ENCODE measurements at regions of chr2 and their contacts with region 1.

Region 1: DNA sequence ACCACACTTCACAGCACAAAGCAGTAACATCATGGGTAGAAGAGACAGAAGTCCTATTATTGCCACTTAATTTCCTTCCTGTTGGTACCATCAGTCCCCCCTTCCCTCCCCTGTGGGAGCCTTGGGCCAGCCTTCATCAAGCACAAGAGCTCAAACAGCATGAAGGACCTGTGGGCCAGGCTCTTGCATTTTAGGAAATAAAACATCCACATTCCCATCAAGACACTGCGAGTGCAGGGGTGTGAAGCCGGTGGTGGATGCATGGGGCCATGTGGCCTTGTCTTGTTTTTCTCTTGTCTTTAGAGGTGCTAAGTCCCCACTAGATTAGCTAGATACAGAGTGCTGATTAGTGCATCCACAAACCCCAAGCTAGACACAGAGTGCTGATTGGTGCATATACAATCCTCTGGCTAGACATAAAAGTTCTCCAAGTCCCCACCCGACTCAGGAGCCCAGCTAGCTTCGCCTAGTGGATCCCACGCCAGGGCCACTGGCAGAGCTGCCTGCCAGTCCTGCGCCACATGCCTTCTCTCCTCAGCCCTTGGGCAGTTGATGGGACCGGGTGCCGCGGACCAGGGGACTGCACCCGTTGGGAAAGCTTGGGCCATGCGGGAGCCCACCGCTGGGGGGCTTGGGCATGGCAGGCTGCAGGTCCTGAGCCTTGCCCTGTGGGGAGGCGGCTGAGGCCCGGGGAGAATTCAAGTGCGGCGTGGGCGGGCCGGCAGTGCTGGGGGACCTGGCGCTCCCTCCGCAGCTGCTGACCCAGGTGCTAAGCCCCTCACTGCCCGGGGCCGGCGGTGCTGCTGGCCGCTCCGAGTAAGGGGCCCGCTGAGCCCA is 14.7 kb upstream of the PXDN start:
- DNase-seq: no peak
- H3K4me3 ChIP-seq: no peak overlapping the region
- H3K27ac ChIP-seq: no peak overlapping the region
- H3K4me1 ChIP-seq: peaks cover 3% of the 10 kb centered on the region
- H3K27me3 ChIP-seq: no peaks in the 10 kb centered on the region
- CTCF ChIP-seq: no peak
- POLR2A ChIP-seq: no peak

Region 2: DNA sequence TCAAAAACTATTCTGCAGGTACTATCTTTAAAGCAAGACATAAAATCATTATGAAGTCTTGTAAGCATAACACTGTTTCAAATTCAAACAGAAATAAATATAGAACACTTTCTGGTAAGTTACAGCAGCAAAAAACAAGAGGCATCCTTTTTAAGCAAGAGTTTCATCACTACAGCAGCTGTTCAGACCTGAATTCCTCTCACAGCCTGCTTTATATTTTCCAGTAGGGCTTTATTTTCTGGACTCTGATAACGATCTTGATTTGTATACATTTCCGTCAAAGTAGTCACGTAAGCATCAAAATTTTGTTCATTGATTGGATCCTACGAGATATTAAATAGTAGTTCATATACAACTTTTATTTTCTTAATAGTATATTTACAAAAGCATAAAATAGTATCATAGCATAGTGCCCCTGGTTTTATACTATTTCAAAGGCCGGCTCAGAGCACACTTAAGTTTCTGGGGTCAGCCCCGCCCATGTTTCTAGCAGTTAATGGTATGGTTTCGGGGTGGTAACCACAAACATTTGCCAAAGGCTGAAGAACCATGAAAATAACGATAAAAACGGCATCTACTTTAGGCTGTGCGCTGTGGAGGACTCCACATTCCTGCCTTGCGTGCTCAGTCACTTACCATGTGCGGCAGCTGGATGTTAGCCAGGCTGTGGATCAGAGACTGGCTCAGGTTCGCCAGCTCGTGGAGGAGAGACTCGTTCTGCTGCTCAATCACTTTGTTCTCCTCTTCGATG is 32.9 kb after region 1 on chr2:
- CTCF ChIA-PET with region 1: no interaction called
- POLR2A ChIA-PET with region 1: no interaction called
- dilution Hi-C with region 1: no loop called
- intact Hi-C with region 1: loop called (anchors 2 kb)
- DNase-seq: no peak
- H3K4me3 ChIP-seq: no peak overlapping the region
- H3K27ac ChIP-seq: no peak overlapping the region
- H3K4me1 ChIP-seq: no peaks in the 10 kb centered on the region
- H3K27me3 ChIP-seq: peaks cover 0 to 9% of the 10 kb centered on the region in 2 experiments
- CTCF ChIP-seq: no peak
- POLR2A ChIP-seq: no peak

Region 3: DNA sequence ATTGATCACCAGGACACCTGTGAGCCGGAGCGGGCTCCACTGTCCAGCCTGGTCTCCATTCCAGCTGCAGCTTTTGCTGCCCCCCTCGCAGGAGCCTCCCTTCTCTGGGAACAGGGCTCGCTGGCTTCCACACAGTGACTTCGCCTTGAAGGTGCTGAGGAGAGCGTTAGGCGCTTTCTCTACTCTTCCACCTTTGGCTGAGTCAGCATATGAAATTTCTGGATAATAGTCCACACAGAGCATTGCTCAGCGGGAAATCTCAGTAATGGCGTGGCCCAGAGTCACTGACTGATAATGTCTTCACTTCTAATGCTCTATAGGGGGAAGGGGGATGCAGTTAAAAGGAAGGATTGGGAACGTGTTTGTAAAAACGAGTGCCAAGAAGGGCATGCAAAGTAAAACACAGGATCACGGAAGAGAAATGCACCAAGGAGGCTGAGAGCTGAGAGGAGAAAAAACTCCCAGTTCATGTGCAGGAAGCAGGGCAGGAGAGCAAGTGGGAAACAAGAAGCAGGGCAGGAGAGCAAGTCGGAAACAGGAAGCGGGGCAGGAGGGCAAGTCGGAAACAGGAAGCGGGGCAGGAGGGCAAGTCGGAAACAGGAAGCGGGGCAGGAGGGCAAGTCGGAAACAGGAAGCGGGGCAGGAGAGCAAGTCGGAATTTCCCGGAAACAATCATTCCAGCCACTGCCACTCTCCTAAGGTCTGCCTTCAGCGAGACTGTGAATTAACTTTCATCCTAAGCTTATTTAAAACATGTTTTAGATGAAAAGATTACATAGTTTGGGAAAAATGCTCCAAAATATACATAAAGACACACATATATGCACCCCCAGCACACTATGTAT is 494.4 kb after region 1 on chr2:
- CTCF ChIA-PET with region 1: no interaction called
- POLR2A ChIA-PET with region 1: no interaction called
- dilution Hi-C with region 1: no loop called
- intact Hi-C with region 1: no loop called
- DNase-seq: no peak
- H3K4me3 ChIP-seq: no peak overlapping the region
- H3K27ac ChIP-seq: no peak overlapping the region
- H3K4me1 ChIP-seq: no peaks in the 10 kb centered on the region
- H3K27me3 ChIP-seq: no peaks in the 10 kb centered on the region
- CTCF ChIP-seq: no peak
- POLR2A ChIP-seq: no peak